Activated naive CD4-positive, alpha-beta T cell treated with anti-CD3 and anti-CD28 coated beads for 36 hours (primary cell): ENCODE measurements at regions of chr6 and their contacts with region 1.

Region 1: DNA sequence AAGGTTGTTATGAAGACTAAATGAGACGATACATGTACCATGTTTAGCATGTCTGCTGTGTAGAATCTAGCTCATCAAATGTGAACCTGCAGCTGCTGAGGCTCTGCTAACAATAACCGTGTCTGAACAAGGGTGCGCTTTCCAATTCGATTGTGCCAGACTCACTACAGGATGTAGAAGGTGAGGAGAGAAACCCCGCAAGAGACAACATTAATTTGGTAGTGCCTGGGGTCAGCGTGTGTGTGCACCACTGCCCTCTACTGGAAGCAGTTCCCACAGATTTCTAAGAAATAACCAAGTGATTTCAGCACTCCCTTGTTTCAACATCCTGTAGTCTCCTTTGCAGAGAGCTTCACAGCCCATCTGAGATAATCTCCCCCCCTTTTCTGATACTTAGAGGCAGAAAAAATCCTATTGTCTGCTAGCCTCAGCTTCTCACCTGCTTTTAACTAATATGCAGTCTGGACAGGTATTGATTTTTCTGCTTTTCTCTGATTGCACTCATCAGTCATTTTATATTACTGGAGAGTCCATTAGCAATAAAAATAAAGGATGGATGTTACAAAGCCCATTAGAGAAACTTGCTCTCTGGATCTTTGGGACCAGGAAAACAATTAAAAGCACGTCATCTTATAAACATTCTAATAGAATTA is 96.7 kb upstream of the BACH2 start:
- DNase-seq: peak; percentile 92
- H3K4me3 Mint-ChIP-seq: no peak overlapping the region
- H3K27ac Mint-ChIP-seq: peak overlapping the region; percentile 70
- H3K4me1 Mint-ChIP-seq: peaks cover 78% of the 10 kb centered on the region
- H3K27me3 Mint-ChIP-seq: no peaks in the 10 kb centered on the region

Region 2: DNA sequence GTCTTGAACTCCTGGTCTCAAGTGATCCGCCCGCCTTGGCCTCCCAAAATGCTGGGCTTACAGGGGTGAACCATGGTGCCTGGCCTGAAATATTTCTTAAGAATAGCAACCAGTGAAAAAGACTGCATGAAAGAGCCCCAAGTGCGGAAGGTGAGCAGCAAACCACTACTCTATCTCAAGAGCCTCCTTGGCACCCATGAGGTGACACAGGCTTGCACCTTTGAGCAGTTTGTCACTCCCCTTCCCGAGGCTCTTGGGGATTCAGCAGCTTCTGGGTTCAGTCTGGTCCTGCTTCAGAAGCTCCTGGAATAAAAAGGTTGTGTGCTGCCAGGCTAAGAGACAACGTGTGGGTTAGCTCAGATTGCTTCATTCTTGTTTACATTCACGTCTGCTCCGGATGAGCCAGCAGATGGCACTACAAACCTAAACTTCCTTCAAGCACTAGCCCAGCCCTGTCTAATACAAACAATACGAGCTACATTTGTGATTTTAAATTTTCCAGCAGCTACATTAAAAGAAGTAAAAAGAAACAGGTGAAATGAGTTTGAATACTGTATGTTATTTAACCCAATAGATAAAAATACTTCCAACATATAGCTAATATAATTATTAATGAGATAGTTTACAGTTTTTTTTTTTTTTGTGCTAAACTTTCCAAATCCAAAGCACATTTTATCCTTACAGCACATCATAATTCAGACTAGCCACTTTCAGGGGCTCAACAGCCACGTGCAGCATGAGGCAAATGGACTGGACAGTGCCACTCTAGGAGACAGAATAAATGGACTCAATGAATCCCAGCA is 452.9 kb before region 1 on chr6:
- CTCF ChIA-PET with region 1: interaction called, 15 read pairs
- intact Hi-C with region 1: loop called (anchors 1 kb)
- DNase-seq: peak; percentile 86
- H3K4me3 Mint-ChIP-seq: no peak overlapping the region
- H3K27ac Mint-ChIP-seq: peak overlapping the region; percentile 74
- H3K4me1 Mint-ChIP-seq: peaks cover 70% of the 10 kb centered on the region
- H3K27me3 Mint-ChIP-seq: no peaks in the 10 kb centered on the region

Region 3: DNA sequence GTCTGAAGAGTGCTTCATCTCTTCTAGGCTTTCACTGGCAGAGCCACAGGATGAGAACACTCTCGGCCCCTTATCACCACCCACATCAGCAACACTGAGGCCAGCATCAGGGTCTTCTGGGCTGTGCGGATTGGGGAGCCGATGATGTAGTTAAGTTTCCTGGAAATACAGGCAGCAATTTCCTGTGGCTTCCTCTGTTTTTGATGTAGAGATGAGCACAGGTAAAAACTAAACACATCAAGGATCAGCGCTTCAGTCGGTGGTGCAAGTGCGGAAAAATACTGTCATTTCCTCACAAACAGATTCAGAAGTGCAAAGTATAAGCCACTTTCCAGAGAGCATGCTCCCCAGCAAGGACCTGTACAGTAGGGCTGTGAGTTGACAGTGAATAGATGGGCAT is 159.4 kb before region 1 on chr6:
- CTCF ChIA-PET with region 1: no interaction called
- intact Hi-C with region 1: loop called (anchors 1 kb)
- DNase-seq: peak; percentile 77
- H3K4me3 Mint-ChIP-seq: peak overlapping the region; percentile 60
- H3K27ac Mint-ChIP-seq: peak overlapping the region; percentile 95
- H3K4me1 Mint-ChIP-seq: peaks cover 94% of the 10 kb centered on the region
- H3K27me3 Mint-ChIP-seq: no peaks in the 10 kb centered on the region

Region 4: DNA sequence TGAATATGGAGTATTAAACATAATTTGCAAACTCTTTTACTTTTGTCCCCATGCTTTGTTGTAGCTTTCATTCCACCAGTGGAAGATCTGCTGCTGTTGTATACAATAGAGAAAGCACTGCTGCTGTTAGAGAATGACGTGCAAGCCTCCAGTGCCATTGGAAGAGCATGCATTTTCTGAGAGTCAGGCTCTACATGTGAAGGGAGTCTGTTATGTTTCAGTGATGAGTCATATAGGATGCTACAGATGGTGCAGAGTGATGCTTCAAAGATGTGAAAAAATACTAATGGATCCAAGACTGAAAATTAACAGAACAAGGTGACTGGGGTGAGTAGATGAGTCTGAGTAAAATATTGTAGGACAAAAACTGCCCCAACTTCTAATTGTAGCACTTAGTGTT is 74.3 kb before region 1 on chr6:
- CTCF ChIA-PET with region 1: interaction called, 7 read pairs
- intact Hi-C with region 1: loop called (anchors 1 kb)
- DNase-seq: peak; percentile 55
- H3K4me3 Mint-ChIP-seq: no peak overlapping the region
- H3K27ac Mint-ChIP-seq: peak overlapping the region; percentile 55
- H3K4me1 Mint-ChIP-seq: peaks cover 40% of the 10 kb centered on the region
- H3K27me3 Mint-ChIP-seq: no peaks in the 10 kb centered on the region

Region 5: GRCh38 chr6:90413867-90414266 is 20.5 kb after region 1 on chr6:
- CTCF ChIA-PET with region 1: interaction called, 55 read pairs
- intact Hi-C with region 1: loop called (anchors 1 kb)
- DNase-seq: peak; percentile 96
- H3K4me3 Mint-ChIP-seq: peak overlapping the region; percentile 71
- H3K27ac Mint-ChIP-seq: peak overlapping the region; percentile 94
- H3K4me1 Mint-ChIP-seq: peaks cover 69% of the 10 kb centered on the region
- H3K27me3 Mint-ChIP-seq: no peaks in the 10 kb centered on the region

Region 6: GRCh38 chr6:90466154-90466940 is 73.0 kb after region 1 on chr6:
- CTCF ChIA-PET with region 1: interaction called, 89 read pairs
- intact Hi-C with region 1: loop called (anchors 1 kb)
- DNase-seq: peak; percentile 73
- H3K4me3 Mint-ChIP-seq: no peak overlapping the region
- H3K27ac Mint-ChIP-seq: peak overlapping the region; percentile 90
- H3K4me1 Mint-ChIP-seq: peaks cover 82% of the 10 kb centered on the region
- H3K27me3 Mint-ChIP-seq: no peaks in the 10 kb centered on the region

Region 7: GRCh38 chr6:90595854-90596253 is 202.5 kb after region 1 on chr6:
- CTCF ChIA-PET with region 1: no interaction called
- intact Hi-C with region 1: no loop called
- DNase-seq: no peak
- H3K4me3 Mint-ChIP-seq: no peak overlapping the region
- H3K27ac Mint-ChIP-seq: no peak overlapping the region
- H3K4me1 Mint-ChIP-seq: no peaks in the 10 kb centered on the region
- H3K27me3 Mint-ChIP-seq: peaks cover 14% of the 10 kb centered on the region